Activated CD4-positive, alpha-beta memory T cell treated with anti-CD3 and anti-CD28 coated beads, Interleukin-2, amount 10 ng/mL, durations not matched to agents 7 days and 5 days (primary cell): ENCODE measurements at regions of chr11 and their contacts with region 1.

Region 1: GRCh38 chr11:45655347-45655756 is 10.1 kb downstream of the CHST1 start:
- DNase-seq: peak; percentile 58
- H3K4me3 Mint-ChIP-seq: no peak overlapping the region
- H3K27ac Mint-ChIP-seq: no peak overlapping the region
- H3K4me1 Mint-ChIP-seq: no peaks in the 10 kb centered on the region
- H3K27me3 Mint-ChIP-seq: peaks cover 18% of the 10 kb centered on the region

Region 2: GRCh38 chr11:45643598-45644260 is 11.6 kb before region 1 on chr11:
- CTCF ChIA-PET with region 1: interaction called, 11 read pairs
- POLR2A ChIA-PET with region 1: no interaction called
- DNase-seq: no peak
- H3K4me3 Mint-ChIP-seq: no peak overlapping the region
- H3K27ac Mint-ChIP-seq: no peak overlapping the region
- H3K4me1 Mint-ChIP-seq: no peaks in the 10 kb centered on the region
- H3K27me3 Mint-ChIP-seq: peaks cover 20% of the 10 kb centered on the region

Region 3: GRCh38 chr11:45678971-45679370 is 23.6 kb after region 1 on chr11:
- CTCF ChIA-PET with region 1: no interaction called
- POLR2A ChIA-PET with region 1: no interaction called
- DNase-seq: no peak
- H3K4me3 Mint-ChIP-seq: no peak overlapping the region
- H3K27ac Mint-ChIP-seq: no peak overlapping the region
- H3K4me1 Mint-ChIP-seq: no peaks in the 10 kb centered on the region
- H3K27me3 Mint-ChIP-seq: no peaks in the 10 kb centered on the region